ENCODE measurements at regions of chr3 and their contacts with region 1.

Region 1: GRCh38 chr3:64939747-64940450 is 252.1 kb upstream of the ADAMTS9 start:
- DNase-seq: no peak
- ATAC-seq: no peak
- H3K4me3 ChIP-seq: no peak overlapping the region
- H3K27ac ChIP-seq: no peak overlapping the region
- H3K4me1 ChIP-seq: no peaks in the 10 kb centered on the region
- H3K27me3 ChIP-seq: no peaks in the 10 kb centered on the region
- CTCF ChIP-seq: no peak
- EP300 ChIP-seq: no peak
- POLR2A ChIP-seq: no peak
- RAD21 ChIP-seq: no peak

Region 2: DNA sequence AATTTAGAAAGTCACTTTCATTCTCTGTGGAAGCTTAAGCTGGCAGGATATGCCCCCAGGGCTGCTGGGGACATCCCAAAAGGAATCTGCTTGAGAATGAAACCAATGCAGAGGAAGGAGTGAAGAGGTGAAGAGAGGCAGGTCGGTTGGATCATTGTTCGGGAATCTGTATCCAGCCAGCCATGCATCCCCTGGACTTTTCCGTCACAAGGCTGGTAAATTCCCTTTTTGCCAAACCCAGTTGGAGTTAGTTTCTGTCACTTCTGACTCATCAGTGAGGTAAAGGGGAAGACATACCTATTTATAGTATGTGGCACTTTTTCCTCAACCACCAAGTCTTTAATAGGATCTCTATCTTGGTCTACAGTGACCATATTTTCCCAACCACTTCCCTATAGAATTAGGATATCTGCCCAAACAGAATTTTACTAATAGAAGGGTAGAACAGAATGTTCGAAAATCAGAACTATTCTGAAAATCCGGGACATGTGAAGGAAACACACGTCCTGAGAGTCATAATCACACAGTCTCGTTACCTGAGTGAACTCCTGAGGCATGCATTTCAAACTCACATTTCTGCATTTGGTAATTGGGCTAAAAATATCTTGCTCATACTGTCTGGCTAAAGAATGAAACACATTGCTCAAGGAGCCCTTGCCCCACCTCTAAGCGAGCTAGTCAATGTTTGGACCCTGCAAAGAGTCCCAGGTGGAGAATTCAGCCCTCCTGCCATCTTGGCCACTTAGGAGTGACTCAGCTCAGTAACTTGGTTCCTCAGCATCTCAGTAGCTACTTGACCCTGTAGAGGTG is 37.6 kb after region 1 on chr3:
- CTCF ChIA-PET with region 1: no interaction called
- POLR2A ChIA-PET with region 1: no interaction called
- RAD21 ChIA-PET with region 1: no interaction called
- SMC1A ChIA-PET with region 1: no interaction called
- in situ Hi-C with region 1: no loop called
- intact Hi-C with region 1: no loop called
- DNase-seq: no peak
- ATAC-seq: no peak
- H3K4me3 ChIP-seq: no peak overlapping the region
- H3K27ac ChIP-seq: no peak overlapping the region
- H3K4me1 ChIP-seq: no peaks in the 10 kb centered on the region
- H3K27me3 ChIP-seq: no peaks in the 10 kb centered on the region
- CTCF ChIP-seq: no peak
- EP300 ChIP-seq: no peak
- POLR2A ChIP-seq: no peak
- RAD21 ChIP-seq: no peak

Region 3: GRCh38 chr3:64988188-64988587 is 48.3 kb after region 1 on chr3:
- CTCF ChIA-PET with region 1: no interaction called
- POLR2A ChIA-PET with region 1: interaction called, 10 read pairs
- RAD21 ChIA-PET with region 1: no interaction called
- SMC1A ChIA-PET with region 1: no interaction called
- in situ Hi-C with region 1: no loop called
- intact Hi-C with region 1: no loop called
- DNase-seq: no peak
- ATAC-seq: no peak
- H3K4me3 ChIP-seq: no peak overlapping the region
- H3K27ac ChIP-seq: no peak overlapping the region
- H3K4me1 ChIP-seq: no peaks in the 10 kb centered on the region
- H3K27me3 ChIP-seq: no peaks in the 10 kb centered on the region
- CTCF ChIP-seq: no peak
- EP300 ChIP-seq: no peak
- POLR2A ChIP-seq: no peak
- RAD21 ChIP-seq: no peak